ENCODE measurements at regions of chr12 and their contacts with region 1.

Region 1: DNA sequence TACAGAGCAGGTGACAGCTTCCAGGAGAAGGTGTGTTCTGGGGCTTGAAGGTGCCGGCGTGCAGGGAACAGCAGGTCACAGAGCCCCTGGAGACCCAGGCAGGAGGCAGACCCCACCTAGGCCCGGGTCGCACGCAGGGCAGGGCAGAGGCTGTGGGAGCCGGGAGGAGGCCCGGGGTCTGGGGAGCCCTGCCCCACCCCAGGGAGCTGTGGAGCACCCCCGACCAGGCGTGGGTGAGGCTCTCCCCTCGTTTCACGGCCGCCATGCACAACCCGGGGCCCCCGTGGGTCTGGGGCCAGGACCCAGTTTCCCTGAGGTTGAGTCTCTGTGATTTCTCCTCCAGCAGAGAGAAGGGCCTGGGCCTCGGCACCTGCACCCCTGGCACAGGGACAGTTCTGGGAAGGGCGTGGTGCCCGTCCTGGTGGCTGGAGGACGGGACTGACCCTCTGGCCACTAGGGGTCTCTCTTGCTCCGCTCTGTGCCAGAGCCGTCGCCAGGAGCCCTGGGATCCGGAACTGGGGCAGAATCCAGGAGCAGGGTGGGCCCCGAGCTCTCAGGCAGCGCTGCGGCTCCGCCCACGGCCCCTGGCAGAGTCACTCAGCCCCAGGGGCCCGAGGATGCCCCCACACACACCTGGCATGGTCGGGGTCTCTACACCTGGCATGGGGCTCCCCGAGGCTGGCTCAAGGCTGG is 75.2 kb upstream of the FBRSL1 start:
- DNase-seq: no peak
- H3K4me3 ChIP-seq: no peak overlapping the region
- H3K27me3 ChIP-seq: peaks cover 4% of the 10 kb centered on the region; the same call in 1 of the 2 replicates
- CTCF ChIP-seq: peak; percentile 97

Region 2: DNA sequence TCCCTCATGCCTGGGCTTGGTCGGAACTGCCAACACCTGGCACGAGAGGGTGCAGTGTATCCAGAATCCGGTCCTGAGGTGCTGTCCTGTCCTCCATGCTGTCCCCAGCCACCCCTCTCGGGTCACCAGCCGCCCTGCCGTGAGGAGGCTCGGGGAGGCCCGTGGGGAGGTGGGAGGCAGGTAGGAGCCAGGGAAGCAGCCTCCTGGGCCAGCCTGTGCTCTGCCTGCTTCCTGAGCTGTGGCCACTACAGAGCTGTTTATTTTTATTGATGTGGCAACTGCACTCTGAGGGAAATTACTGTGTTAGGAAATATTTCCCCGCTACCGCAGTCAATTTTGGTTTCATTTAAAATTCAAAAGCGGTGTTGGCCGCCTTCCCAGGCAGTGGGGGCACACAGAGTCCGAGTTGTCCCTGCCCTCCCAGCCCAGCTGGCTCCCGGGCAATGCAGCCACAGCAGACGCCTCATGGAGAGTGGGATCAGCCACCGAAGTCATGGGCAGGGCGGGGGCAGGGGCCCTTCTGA is 252.2 kb before region 1 on chr12:
- CTCF ChIA-PET with region 1: interaction called, 11 read pairs
- POLR2A ChIA-PET with region 1: no interaction called
- DNase-seq: peak; percentile 50
- H3K4me3 ChIP-seq: no peak overlapping the region
- H3K27me3 ChIP-seq: peaks cover 7% of the 10 kb centered on the region; the same call in 1 of the 2 replicates
- CTCF ChIP-seq: no peak

Region 3: DNA sequence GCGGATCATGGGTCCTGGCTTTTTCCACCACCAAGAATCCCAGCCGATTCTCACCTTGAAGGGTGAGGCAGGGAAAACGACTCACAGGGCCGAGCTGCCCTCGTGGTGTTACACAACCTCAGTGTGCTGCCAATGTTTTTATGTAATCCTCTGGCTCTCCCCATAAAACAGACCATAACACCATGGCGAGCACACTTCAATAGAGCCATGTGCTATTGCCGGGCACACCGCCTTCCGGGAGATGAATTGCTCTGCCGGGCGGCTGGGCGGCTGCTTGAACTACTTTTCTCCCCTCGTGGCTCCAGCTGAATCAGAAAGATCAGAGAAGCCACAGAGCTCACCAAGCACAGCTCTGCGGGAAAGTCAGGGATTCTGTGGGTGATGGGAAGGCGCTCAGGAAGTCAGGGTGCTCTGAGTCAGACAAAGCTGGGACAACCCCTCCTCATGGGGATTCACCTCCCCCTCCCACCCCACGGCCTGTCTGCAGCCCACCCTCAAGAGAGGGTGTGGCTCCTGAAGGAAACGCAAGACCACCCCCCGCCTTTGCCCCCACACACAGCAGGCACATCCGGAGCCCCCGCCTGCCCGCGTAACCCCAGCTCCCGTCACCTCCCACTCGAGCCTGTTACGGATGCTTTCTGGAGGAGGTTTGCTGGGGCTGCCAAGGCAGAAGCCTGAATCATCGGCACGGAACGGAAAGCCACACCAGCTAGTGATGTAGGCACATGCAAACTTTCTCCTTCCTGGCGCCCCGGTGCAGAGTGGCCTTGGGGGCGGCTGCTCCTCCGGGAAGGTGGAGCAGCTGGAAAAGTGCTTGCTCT is 87.2 kb before region 1 on chr12:
- CTCF ChIA-PET with region 1: no interaction called
- POLR2A ChIA-PET with region 1: no interaction called
- DNase-seq: peak; percentile 47
- H3K4me3 ChIP-seq: peak overlapping the region; percentile 25
- H3K27me3 ChIP-seq: peaks cover 11% of the 10 kb centered on the region
- CTCF ChIP-seq: no peak

Region 4: GRCh38 chr12:132523576-132524331 is 109.0 kb after region 1 on chr12:
- CTCF ChIA-PET with region 1: interaction called, 102 read pairs
- POLR2A ChIA-PET with region 1: no interaction called
- DNase-seq: no peak
- H3K4me3 ChIP-seq: no peak overlapping the region
- H3K27me3 ChIP-seq: no peaks in the 10 kb centered on the region
- CTCF ChIP-seq: peak; percentile 88

Region 5: GRCh38 chr12:132614861-132615578 is 200.2 kb after region 1 on chr12:
- CTCF ChIA-PET with region 1: interaction called, 73 read pairs
- POLR2A ChIA-PET with region 1: no interaction called
- DNase-seq: no peak
- H3K4me3 ChIP-seq: no peak overlapping the region
- H3K27me3 ChIP-seq: peaks cover 25% of the 10 kb centered on the region
- CTCF ChIP-seq: peak; percentile 90

Region 6: GRCh38 chr12:132638541-132639418 is 224.0 kb after region 1 on chr12:
- CTCF ChIA-PET with region 1: interaction called, 26 read pairs
- POLR2A ChIA-PET with region 1: no interaction called
- DNase-seq: peak; percentile 17
- H3K4me3 ChIP-seq: no peak overlapping the region
- H3K27me3 ChIP-seq: no peaks in the 10 kb centered on the region
- CTCF ChIP-seq: peak; percentile 88

Region 7: GRCh38 chr12:132908145-132909044 is 493.6 kb after region 1 on chr12:
- CTCF ChIA-PET with region 1: no interaction called
- POLR2A ChIA-PET with region 1: no interaction called
- DNase-seq: peak; percentile 92
- H3K4me3 ChIP-seq: peak overlapping the region; percentile 79
- H3K27me3 ChIP-seq: no peaks in the 10 kb centered on the region
- CTCF ChIP-seq: no peak

Region 8: DNA sequence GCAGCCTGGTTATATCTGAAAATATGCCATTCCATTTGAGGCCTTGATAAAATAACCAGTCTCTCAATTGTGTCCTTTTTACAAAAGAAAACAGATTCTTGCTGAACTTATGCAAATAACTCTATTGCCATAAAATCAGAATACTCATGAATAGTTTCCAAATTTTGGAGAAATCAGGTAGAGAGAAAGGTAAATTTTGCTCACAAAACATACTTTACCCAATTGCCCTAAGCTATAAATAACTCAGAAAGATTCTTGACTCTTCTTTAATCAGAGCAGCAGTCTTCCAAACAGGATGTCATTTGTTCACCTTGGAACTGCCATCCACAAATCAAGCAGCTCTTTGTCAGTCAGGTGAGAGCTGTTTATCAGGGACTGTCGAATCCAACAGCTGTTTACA is 584.0 kb after region 1 on chr12:
- CTCF ChIA-PET with region 1: no interaction called
- POLR2A ChIA-PET with region 1: no interaction called
- DNase-seq: no peak
- H3K4me3 ChIP-seq: no peak overlapping the region
- H3K27me3 ChIP-seq: no peaks in the 10 kb centered on the region
- CTCF ChIP-seq: no peak

Measured in BJ (cell line).